Head of caudate nucleus (tissue), 42 donors: ENCODE measurements at regions of chr1 and their contacts with region 1.

Region 1: GRCh38 chr1:154479764-154480421 is 22.1 kb upstream of the TDRD10 start:
- DNase-seq: peak in 40 of 42 donors; percentile 25 to 92 (median 72)

Region 2: DNA sequence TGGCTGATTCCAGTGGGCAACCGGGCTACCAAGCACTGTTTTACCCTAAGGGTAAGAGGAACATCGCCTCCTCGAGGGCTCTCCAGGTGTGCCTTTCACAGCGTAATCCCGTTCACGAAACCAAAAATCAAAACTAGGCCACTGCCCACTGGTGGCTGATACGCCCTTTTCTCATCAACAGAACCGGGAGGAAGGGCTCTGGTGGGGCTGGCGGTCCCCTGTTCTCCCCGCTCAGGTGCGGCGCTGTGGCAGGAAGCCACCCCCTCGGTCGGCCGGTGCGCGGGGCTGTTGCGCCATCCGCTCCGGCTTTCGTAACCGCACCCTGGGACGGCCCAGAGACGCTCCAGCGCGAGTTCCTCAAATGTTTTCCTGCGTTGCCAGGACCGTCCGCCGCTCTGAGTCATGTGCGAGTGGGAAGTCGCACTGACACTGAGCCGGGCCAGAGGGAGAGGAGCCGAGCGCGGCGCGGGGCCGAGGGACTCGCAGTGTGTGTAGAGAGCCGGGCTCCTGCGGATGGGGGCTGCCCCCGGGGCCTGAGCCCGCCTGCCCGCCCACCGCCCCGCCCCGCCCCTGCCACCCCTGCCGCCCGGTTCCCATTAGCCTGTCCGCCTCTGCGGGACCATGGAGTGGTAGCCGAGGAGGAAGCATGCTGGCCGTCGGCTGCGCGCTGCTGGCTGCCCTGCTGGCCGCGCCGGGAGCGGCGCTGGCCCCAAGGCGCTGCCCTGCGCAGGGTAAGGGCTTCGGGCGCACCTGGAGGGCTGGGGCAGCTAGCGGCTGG is 74.7 kb before region 1 on chr1 and contains the start of gene IL6R:
- intact Hi-C with region 1: no loop called
- DNase-seq: peak; percentile 36 to 90 (median 72)

Region 3: GRCh38 chr1:154546264-154547063 is 66.6 kb after region 1 on chr1:
- intact Hi-C with region 1: loop called (anchors 5 kb)
- DNase-seq: peak; percentile 29 to 82 (median 62)

Region 4: GRCh38 chr1:154870115-154870571 is 390.2 kb after region 1 on chr1 and contains the start of gene KCNN3:
- intact Hi-C with region 1: loop called (anchors 10 kb)
- DNase-seq: peak; percentile 88 to 99 (median 96)